Activated B cell treated with CpG ODN at 0.5 μM for 24 hours (primary cell): ENCODE measurements at regions of chr17 and their contacts with region 1.

Region 1: GRCh38 chr17:36089888-36090836 is at the start of gene CCL3:
- DNase-seq: peak; percentile 71
- ATAC-seq: peak; percentile 78
- H3K4me3 Mint-ChIP-seq: peak within 1 kb of the TSS; percentile 86
- H3K27ac Mint-ChIP-seq: peak within 1 kb of the TSS; percentile 96
- H3K4me1 Mint-ChIP-seq: peaks cover 79% of the 10 kb centered on the region
- H3K27me3 Mint-ChIP-seq: no peaks in the 10 kb centered on the region
- CTCF ChIP-seq: no peak
- total RNA-seq, gene CCL3: 74.4 and 74.5 TPM in 2 replicates

Region 2: DNA sequence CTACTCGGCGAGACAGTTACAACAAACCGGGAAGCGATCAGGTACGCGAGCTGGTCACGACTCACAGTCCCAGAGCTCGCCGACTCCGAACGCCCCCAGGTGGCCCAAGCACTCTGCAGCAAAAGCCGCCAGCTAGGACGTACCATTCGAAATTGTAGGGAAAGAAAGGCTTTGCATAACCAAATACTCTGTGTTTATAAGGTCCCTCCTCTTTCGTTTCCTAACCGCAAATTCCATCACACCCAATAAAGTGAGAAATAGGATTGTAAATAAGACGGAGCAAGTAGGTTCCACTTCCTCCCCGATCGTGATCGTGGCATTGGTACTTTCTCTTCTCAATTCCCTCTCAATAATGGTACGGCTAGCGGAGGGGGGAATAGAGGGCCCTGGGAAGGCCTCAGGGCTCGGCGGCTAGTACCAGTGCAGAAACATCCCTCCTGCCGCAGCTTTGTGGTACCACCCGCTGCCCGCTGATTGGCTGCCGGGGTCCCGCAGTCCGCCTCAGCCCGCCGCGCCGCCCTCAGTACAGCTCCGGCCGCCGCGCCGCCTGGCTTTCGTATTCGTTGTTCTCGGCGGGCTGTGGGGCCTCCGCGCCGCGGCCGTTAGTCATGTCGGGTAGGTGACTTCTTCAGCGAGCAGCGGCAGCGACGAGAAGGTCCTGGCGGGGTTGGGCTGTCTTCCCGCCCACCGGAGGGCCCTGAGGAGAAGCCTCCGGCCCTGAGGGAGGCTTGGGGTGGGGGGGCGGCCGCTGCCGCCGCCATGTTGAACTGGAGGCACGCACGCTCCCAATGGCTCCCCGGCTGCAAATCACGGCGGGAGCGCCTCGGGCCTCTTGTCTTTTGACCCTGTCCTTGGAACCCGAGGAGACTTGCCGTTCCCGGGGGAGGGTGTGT is 281.0 kb before region 1 on chr17 and contains the start of gene TAF15:
- CTCF ChIA-PET with region 1: no interaction called
- POLR2A ChIA-PET with region 1: interaction called, 10 read pairs
- intact Hi-C with region 1: no loop called
- DNase-seq: peak; percentile 91
- ATAC-seq: peak; percentile 88
- H3K4me3 Mint-ChIP-seq: peak within 1 kb of the TSS; percentile 93
- H3K27ac Mint-ChIP-seq: peak within 1 kb of the TSS; percentile 100
- H3K4me1 Mint-ChIP-seq: peaks cover 55% of the 10 kb centered on the region
- H3K27me3 Mint-ChIP-seq: no peaks in the 10 kb centered on the region
- CTCF ChIP-seq: no peak
- total RNA-seq, gene TAF15: 224 and 243 TPM in 2 replicates

Region 3: DNA sequence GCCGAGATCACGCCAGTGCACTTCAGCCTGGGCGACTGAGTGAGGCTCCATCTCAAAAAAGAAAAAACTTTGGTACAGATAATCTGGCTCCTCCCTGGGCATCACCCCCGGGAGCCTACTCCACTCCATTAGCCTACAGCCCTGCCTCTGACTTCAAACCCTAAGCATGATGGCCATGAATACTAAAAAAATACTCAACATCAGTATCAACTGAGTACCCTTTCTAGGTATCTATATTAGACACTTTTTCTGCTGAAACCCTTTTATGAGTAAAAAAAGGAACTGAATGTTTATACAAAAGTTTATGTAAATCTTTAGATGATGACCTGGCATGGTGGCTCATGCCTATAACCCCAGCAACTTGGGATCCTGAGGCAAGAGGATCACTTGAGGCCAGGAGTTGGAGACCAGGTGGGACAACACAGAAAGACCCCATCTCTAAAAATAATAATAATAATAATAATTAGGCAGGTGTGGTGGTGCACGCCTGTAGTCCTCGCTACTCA is 166.5 kb before region 1 on chr17:
- CTCF ChIA-PET with region 1: no interaction called
- POLR2A ChIA-PET with region 1: no interaction called
- intact Hi-C with region 1: no loop called
- DNase-seq: no peak
- ATAC-seq: peak; percentile 47
- H3K4me3 Mint-ChIP-seq: no peak overlapping the region
- H3K27ac Mint-ChIP-seq: no peak overlapping the region
- H3K4me1 Mint-ChIP-seq: peaks cover 8% of the 10 kb centered on the region
- H3K27me3 Mint-ChIP-seq: no peaks in the 10 kb centered on the region
- CTCF ChIP-seq: no peak

Region 4: DNA sequence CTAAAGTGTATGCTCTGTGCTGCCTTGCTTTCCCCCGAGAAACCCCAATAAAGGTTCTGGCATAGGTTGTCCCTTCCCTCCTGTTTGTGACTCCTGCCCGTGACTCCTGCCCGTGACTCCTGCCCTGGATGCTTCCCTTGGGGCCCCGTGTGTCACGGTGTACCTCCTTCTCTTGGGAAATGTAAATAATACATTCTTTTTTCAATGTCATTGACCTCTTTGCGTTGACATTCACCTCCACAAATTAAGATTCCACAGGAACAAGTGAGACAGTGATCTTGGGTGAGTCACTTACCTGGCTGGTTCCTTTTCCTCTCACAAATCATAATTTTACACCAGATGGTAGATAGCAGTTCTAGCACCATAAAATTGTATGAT is 89.4 kb before region 1 on chr17:
- CTCF ChIA-PET with region 1: no interaction called
- POLR2A ChIA-PET with region 1: no interaction called
- intact Hi-C with region 1: loop called (anchors 1 kb)
- DNase-seq: no peak
- ATAC-seq: no peak
- H3K4me3 Mint-ChIP-seq: no peak overlapping the region
- H3K27ac Mint-ChIP-seq: no peak overlapping the region
- H3K4me1 Mint-ChIP-seq: peaks cover 36% of the 10 kb centered on the region
- H3K27me3 Mint-ChIP-seq: peaks cover 11% of the 10 kb centered on the region
- CTCF ChIP-seq: no peak

Region 5: GRCh38 chr17:36072431-36073121 is 17.6 kb before region 1 on chr17:
- CTCF ChIA-PET with region 1: interaction called, 17 read pairs
- POLR2A ChIA-PET with region 1: interaction called, 6 read pairs
- intact Hi-C with region 1: loop called (anchors 1 kb)
- DNase-seq: no peak
- ATAC-seq: peak; percentile 69
- H3K4me3 Mint-ChIP-seq: no peak overlapping the region
- H3K27ac Mint-ChIP-seq: no peak overlapping the region
- H3K4me1 Mint-ChIP-seq: peaks cover 9% of the 10 kb centered on the region
- H3K27me3 Mint-ChIP-seq: peaks cover 4% of the 10 kb centered on the region
- CTCF ChIP-seq: peak; percentile 59

Region 6: DNA sequence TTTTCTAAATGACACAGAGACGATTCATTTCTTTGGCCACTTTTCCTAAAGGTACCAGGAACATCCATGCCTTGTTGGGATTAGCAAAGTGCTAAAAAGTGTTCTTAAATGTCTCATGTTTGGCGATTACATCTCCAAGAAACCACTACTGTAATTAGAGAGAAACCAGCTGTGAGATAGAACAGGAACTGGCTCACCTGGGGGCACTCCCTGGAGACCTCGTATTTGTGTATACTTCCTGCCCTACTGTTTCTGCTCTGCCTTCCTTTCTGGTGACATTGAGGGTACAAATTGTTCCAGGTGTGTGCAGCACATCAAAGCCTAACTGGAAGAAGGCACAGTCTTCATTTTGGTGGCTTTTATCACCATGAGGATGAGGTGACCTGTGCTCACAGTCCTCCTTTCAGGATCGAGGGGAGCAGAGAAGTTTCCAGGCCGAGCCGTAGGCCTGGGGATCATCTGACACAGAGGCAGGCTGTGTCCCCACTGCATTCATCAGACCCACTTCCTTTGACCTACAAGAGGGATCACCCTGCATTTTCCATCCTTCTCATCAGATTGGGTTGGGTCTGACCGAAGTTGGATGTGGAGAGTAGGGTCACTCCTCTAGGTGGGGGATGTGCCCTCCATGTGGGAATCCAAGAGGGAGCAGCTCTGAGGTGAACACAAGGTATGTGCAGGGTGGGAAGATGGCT is 37.2 kb after region 1 on chr17:
- CTCF ChIA-PET with region 1: no interaction called
- POLR2A ChIA-PET with region 1: interaction called, 15 read pairs
- intact Hi-C with region 1: loop called (anchors 2 kb)
- DNase-seq: peak; percentile 28
- ATAC-seq: peak; percentile 87
- H3K4me3 Mint-ChIP-seq: peak overlapping the region; percentile 69
- H3K27ac Mint-ChIP-seq: peak overlapping the region; percentile 87
- H3K4me1 Mint-ChIP-seq: peaks cover 69% of the 10 kb centered on the region
- H3K27me3 Mint-ChIP-seq: no peaks in the 10 kb centered on the region
- CTCF ChIP-seq: no peak

Region 7: DNA sequence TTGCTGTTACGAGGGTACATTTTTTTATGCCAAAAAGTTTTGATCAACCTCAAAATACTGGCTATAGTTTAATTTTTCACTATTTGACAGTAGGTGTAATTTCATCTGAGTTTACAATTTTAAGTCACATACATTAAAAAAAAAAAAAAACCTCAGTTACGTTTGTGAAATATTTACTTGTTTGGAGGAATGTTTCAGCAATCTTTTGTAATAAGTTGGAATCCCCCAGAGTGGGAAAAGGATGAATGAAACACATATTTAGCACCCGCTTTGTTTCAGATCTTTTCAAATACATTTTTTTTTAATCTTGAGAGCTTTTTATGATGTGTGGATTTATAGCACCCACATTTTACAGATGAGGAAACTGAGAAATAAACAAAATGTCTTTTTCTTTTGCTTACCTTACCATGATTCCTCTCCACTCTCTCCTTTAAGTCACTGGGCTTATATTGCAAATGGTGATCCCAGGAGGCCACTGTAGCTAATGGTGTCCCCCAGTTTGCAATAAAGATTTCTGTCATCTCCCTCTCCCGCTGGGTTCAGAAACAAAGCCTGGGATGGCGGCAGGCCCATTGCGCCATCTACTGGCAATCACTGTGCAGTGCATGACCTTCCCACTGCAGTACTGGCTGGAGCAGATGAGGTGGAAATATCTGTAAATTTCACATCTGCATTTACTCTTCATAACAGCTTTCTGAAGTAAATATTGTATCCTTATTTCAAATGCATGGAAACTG is 58.6 kb after region 1 on chr17:
- CTCF ChIA-PET with region 1: interaction called, 9 read pairs
- POLR2A ChIA-PET with region 1: interaction called, 7 read pairs
- intact Hi-C with region 1: loop called (anchors 1 kb)
- DNase-seq: peak; percentile 60
- ATAC-seq: peak; percentile 87
- H3K4me3 Mint-ChIP-seq: peak overlapping the region; percentile 25
- H3K27ac Mint-ChIP-seq: peak overlapping the region; percentile 36
- H3K4me1 Mint-ChIP-seq: peaks cover 49% of the 10 kb centered on the region
- H3K27me3 Mint-ChIP-seq: peaks cover 5% of the 10 kb centered on the region
- CTCF ChIP-seq: peak; percentile 86

Region 8: GRCh38 chr17:37770631-37771518 is 1680.7 kb after region 1 on chr17:
- CTCF ChIA-PET with region 1: no interaction called
- POLR2A ChIA-PET with region 1: no interaction called
- intact Hi-C with region 1: loop called (anchors 5 kb)
- DNase-seq: no peak
- ATAC-seq: no peak
- H3K4me3 Mint-ChIP-seq: no peak overlapping the region
- H3K27ac Mint-ChIP-seq: no peak overlapping the region
- H3K4me1 Mint-ChIP-seq: peaks cover 71% of the 10 kb centered on the region
- H3K27me3 Mint-ChIP-seq: no peaks in the 10 kb centered on the region
- CTCF ChIP-seq: no peak